Pancreas (tissue), 10 donors: ENCODE measurements at regions of chr7 and their contacts with region 1.

Region 1: GRCh38 chr7:36280840-36281812 is 108.5 kb upstream of the ANLN start:
- DNase-seq: peak in 1 of 6 donors; percentile 69
- ATAC-seq: peak; percentile 43 to 83 (median 73)
- H3K4me3 ChIP-seq: no peak overlapping the region
- H3K27ac ChIP-seq: peak overlapping the region in 3 of 4 donors; percentile 22 to 76 (median 46)
- H3K4me1 ChIP-seq: peaks cover 3 to 34% (median 12%) of the 10 kb centered on the region in 3 donors
- H3K27me3 ChIP-seq: no peaks in the 10 kb centered on the region
- CTCF ChIP-seq: no peak

Region 2: DNA sequence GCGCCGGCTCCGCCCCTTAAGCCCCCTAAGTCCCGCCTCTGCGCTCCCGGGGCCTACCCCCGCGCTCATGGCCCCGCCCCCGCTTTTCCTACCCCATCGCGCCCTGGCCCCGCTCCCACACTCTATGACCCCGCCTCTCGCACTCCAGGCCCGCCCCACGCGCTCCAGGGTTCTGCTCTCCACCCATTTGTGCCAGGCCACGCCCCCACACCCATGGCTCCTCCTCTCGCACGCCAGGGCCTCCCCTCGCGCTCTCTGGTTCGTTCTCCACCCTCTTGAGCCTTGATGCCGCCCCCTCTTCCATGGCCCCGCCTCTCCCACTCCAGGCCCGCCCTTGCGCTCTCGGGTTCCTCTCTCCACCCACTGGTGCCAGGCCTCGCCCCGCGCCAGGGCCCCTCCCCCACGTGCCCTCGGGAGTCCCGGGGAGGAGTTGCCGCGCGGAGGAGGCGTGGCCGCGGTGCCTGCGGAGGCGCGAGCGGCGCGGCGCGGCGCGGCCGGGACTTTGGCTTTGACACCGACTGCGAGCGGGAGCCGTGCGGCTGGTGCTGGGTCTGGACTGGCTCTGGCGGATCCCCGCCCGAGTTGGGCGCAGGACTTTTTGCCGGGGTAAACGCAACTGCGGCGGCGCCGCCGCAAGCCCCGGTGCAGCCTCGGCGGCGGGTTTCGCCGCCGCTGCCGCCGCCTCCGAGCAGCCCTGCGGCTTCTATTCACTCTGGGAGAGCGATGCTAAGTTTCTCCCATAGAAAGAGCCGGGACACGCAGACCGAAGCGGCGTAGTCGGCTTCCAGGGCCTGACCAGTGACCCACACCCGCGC is 128.2 kb before region 1 on chr7 and contains the start of gene EEPD1:
- intact Hi-C with region 1: loop called in 1 of 3 experiments (anchors 10 kb)
- DNase-seq: peak; percentile 99 to 100 (median 100)
- ATAC-seq: peak; percentile 90 to 95 (median 92)
- H3K4me3 ChIP-seq: peak within 1 kb of the TSS; percentile 52 to 97 (median 56)
- H3K27ac ChIP-seq: peak within 1 kb of the TSS; percentile 69 to 93 (median 86)
- H3K4me1 ChIP-seq: peaks cover 9 to 34% (median 12%) of the 10 kb centered on the region in 3 donors
- H3K27me3 ChIP-seq: no peaks in the 10 kb centered on the region
- CTCF ChIP-seq: no peak
- total RNA-seq, gene EEPD1: 7.1 to 13.0 (median 8.9) TPM

Region 3: GRCh38 chr7:36600869-36601530 is 319.9 kb after region 1 on chr7:
- intact Hi-C with region 1: no loop called
- DNase-seq: peak in 1 of 6 donors; percentile 14
- ATAC-seq: peak; percentile 82 to 96 (median 90)
- H3K4me3 ChIP-seq: no peak overlapping the region
- H3K27ac ChIP-seq: no peak overlapping the region
- H3K4me1 ChIP-seq: peaks cover 0 to 11% (median 0%) of the 10 kb centered on the region in 3 donors
- H3K27me3 ChIP-seq: no peaks in the 10 kb centered on the region
- CTCF ChIP-seq: no peak